Aorta (tissue), 5 donors: ENCODE measurements at regions of chr17 and their contacts with region 1.

Region 1: DNA sequence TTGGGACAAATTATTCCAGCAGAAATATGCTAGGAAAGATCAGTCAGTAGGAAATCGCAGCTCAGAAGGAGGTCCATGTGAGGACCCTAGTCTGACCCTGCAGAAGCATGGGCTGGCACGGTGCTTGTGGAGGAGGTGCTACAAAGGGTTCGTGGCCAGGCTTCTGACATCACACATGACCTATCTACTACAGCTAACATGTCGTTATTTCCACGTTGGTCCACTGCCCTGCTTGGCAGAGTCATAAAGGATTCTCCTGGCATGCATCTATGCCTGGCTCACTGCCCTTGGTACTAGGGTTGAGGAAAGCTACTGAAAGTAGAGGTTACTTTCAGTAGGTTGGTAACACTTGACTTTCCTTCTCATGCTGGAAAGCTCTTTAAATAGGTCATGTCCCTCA is 118.1 kb upstream of the SHISA6 start:
- DNase-seq: no peak
- ATAC-seq: peak; percentile 29
- H3K4me3 ChIP-seq: no peak overlapping the region
- H3K27ac ChIP-seq: no peak overlapping the region
- H3K4me1 ChIP-seq: no peaks in the 10 kb centered on the region
- H3K27me3 ChIP-seq: no peaks in the 10 kb centered on the region

Region 2: DNA sequence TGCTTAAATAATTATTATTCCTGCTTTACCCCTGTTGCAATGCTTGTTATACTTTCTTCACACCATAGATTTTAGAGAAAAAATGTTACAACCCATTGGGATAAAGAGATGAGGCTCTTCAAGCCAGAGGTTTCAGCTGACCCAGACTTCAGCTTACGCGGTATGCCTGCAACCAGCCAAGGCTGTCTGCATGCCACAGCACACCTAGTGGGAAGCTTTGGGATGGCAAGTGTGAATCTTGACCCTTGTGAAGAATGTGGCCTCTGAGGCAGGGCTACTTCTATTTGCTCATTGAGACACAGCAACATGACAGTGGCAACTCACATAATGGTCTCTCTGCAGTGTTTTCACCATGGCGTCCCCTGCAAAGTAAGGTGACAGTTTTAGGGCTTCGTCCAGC is 91.1 kb before region 1 on chr17:
- intact Hi-C with region 1: loop called in 1 of 2 experiments (anchors 10 kb)
- DNase-seq: no peak
- ATAC-seq: no peak
- H3K4me3 ChIP-seq: no peak overlapping the region
- H3K27ac ChIP-seq: no peak overlapping the region
- H3K4me1 ChIP-seq: no peaks in the 10 kb centered on the region
- H3K27me3 ChIP-seq: no peaks in the 10 kb centered on the region